GM10248 (cell line): ENCODE measurements at regions of chr5 and their contacts with region 1.

Region 1: GRCh38 chr5:173823711-173824528 is 64.2 kb upstream of the CPEB4 start:
- DNase-seq: no peak
- CTCF ChIP-seq: no peak

Region 2: GRCh38 chr5:173789031-173789920 is 34.6 kb before region 1 on chr5:
- CTCF ChIA-PET with region 1: interaction called, 24 read pairs
- POLR2A ChIA-PET with region 1: no interaction called
- DNase-seq: peak; percentile 54
- CTCF ChIP-seq: no peak

Region 3: DNA sequence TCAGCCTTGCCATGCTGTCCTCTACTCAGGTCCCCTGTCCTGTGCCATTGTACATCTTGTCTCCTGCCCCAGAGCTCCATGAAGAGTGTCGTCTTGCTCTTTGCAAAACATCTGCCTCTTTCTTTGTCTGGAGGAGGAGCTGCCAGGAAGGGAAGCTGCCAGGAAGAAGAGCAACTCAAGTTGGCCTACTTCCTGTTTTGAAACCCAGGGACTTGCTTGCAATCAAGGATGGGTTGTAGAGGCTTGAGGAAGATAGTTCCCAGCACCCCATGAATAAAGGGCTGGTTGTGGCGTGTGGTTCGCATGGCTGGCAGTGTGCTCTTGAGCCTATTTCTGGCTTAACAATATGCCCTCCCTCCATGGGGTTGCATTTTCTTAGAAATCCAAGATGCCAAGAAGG is 11.2 kb after region 1 on chr5:
- CTCF ChIA-PET with region 1: interaction called, 14 read pairs
- POLR2A ChIA-PET with region 1: interaction called, 3 read pairs
- DNase-seq: no peak
- CTCF ChIP-seq: no peak

Region 4: GRCh38 chr5:173848986-173849596 is 25.2 kb after region 1 on chr5:
- CTCF ChIA-PET with region 1: interaction called, 11 read pairs
- POLR2A ChIA-PET with region 1: interaction called, 4 read pairs
- DNase-seq: no peak
- CTCF ChIP-seq: no peak

Region 5: GRCh38 chr5:174106997-174107655 is 283.2 kb after region 1 on chr5:
- CTCF ChIA-PET with region 1: no interaction called
- POLR2A ChIA-PET with region 1: no interaction called
- DNase-seq: no peak
- CTCF ChIP-seq: no peak